PC-3 (cell line): ENCODE measurements at regions of chr4 and their contacts with region 1.

Region 1: DNA sequence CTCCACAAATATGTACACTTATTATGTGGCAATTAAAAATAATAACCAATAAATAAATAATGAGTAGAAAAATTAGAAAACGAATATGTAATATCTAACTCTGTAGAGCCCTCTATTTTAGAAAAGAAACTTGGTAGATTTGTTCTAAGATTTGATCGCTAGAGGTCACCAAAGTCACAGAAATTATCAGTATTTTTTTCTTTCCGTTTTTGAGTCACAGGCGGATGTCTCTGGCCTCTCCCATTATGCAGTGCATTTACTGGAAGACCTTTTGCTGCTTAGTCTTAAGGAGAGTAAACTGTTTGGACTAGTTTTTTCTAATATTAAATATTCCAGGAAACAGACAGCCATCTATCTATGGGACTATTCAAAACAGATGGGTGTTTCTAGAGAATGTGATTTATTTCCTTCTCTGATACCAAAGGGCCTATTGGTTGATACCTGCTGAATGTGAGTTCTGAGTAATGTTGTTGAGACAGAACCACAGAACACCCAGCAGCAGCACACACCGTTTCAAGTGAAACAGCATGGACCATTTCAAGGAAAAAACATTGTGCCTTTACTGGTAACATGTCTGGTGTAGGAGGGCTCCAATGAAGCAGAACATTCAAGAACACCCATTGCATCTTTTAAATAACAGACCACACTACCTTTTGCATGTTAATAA is 34.0 kb upstream of the GYPA start:
- DNase-seq: peak; percentile 81
- ATAC-seq: peak; percentile 80
- H3K4me3 ChIP-seq: no peak overlapping the region
- H3K27ac ChIP-seq: no peak overlapping the region
- H3K4me1 ChIP-seq: no peaks in the 10 kb centered on the region
- H3K27me3 ChIP-seq: peaks cover 25% of the 10 kb centered on the region
- CTCF ChIP-seq: peak; percentile 74

Region 2: DNA sequence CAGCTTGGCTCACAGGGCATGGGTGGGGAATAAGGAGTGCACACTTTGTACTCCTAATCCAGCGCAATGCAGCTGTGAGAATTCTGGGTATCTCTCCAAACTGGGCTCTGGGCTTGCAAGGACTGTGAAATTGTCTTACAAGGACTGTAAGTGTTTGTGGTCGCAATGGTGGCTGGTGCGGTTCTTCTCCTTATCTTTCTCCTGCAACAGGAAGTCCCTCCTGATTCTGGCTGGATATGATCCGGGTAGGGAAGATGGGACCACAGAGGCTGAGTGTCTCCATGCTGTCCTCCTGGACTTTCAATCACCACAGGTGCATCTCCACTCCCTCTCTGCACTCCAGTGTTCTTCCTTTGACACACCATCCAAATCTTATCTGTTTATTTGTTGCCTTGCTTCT is 213.5 kb before region 1 on chr4:
- CTCF ChIA-PET with region 1: no interaction called
- POLR2A ChIA-PET with region 1: no interaction called
- intact Hi-C with region 1: no loop called
- DNase-seq: no peak
- ATAC-seq: no peak
- H3K4me3 ChIP-seq: no peak overlapping the region
- H3K27ac ChIP-seq: no peak overlapping the region
- H3K4me1 ChIP-seq: no peaks in the 10 kb centered on the region
- H3K27me3 ChIP-seq: no peaks in the 10 kb centered on the region
- CTCF ChIP-seq: no peak

Region 3: DNA sequence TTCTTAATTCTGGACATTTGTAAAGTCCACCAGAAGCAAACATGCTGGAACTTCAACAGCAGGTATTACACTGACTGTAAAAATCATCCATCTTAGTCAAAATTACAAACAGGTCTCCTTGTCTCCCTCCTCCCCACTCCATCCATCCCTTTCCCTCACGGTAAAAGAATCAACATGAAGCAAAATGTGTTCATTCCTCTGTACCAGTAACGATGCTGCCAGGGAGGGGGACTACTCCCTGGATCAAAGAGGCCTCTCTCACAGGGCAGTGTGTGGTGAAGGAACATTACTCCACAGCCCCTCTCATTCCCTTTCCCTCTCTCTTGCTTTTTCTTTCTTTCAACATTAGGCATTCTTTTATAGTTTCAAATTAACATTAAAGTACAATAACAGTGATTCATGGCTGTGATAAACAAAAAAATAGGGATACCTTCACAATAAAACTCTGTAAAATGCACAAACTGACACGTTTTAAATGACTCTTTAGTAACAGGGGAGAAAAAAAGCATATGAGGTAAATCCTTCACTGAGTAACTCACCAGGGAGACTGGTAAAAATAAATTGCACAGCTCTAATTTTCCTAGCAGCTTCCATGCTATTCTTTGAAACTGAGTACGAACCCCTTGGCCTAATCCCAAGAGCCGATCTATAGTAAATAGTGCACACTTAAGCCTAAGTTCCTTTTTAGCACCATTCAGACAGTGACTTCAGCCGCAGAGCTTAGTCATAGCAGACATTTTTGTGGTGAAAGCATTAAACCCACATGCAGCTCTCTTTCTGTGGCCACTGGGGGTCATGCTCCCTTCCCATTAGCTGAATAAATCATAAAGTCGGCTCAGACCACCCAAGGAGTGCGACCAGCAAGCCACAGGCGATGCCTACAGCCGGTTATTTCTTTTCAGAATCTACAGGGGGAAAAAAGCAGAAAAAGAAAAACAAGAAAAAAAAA is 181.5 kb after region 1 on chr4:
- CTCF ChIA-PET with region 1: no interaction called
- POLR2A ChIA-PET with region 1: no interaction called
- intact Hi-C with region 1: loop called (anchors 10 kb)
- DNase-seq: peak; percentile 85
- ATAC-seq: peak; percentile 95
- H3K4me3 ChIP-seq: no peak overlapping the region
- H3K27ac ChIP-seq: no peak overlapping the region
- H3K4me1 ChIP-seq: peaks cover 12% of the 10 kb centered on the region; the same call in 1 of the 2 replicates
- H3K27me3 ChIP-seq: peaks cover 5% of the 10 kb centered on the region; the same call in 1 of the 2 replicates
- CTCF ChIP-seq: peak; percentile 48

Region 4: DNA sequence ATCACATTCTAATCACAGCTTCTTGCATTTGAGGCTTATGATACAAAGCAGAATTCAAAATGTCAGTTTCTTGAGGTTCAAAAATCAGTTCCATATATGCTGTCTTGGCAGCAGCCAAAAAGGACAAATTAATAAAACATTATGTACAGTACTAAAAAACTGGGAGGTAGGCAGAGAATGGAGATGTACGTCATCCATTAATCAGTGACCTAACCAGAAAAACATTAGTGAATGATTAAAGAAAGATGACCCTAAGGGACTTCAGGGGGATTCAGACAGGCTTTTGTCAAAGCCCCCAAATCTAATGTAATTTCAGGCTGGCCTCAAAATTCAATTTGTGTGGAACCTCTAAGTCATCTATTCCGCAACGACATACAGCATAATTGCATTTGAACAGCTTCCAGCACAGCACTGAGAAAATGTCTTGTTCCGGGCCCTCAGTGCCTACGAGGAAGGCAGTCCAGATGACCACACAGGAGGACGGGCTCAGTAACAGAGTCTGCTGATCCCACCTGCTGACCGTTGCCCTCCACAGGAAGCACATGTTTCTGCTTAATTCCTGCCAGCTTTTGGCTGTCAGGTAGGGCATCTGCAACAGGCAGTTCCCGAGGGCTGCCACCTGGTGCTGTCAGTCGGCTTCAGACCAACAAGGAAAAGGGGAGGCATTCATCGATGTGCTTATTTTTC is 387.6 kb after region 1 on chr4:
- CTCF ChIA-PET with region 1: no interaction called
- POLR2A ChIA-PET with region 1: no interaction called
- intact Hi-C with region 1: loop called (anchors 1 kb)
- DNase-seq: no peak
- ATAC-seq: no peak
- H3K4me3 ChIP-seq: no peak overlapping the region
- H3K27ac ChIP-seq: no peak overlapping the region
- H3K4me1 ChIP-seq: peaks cover 9% of the 10 kb centered on the region
- H3K27me3 ChIP-seq: no peaks in the 10 kb centered on the region
- CTCF ChIP-seq: no peak

Region 5: DNA sequence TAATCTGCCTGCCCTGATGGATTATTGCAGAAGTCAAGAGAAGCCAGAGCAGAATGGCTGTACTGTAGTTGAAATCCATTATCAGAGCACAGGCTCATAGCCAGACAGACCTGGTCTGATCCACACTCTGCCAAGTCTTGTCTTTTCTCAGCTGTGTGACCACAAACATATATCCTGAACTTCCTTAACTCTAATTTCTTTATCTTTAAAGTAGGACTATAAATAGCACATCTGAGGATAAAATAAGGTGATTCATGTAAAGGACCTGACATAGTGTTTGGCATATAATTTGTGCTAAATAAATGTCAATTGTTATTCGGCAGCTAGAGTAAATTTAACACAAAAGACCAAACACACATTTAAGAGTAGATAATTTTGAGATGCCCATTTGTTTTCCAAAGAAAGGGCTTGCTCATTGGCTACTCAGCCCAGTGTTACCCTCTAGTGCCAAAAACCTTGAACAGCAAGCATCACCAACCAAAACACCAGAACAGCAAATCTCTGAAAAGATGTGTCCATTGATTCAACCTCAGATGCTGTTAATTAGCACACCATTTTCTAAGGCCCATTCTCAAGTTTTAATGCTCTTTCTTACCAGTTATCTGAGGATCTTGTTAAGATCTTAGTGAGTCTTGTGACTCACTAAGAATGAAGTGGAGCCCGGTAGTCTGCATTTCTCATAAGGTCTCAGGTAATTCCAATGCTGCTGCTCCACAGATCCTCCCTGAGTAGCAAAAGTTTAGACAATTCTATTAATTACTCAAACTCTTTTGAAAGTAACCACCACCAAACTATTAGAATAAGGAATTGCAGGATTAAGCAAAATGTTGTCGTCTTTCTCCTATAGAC is 580.3 kb after region 1 on chr4:
- CTCF ChIA-PET with region 1: no interaction called
- POLR2A ChIA-PET with region 1: no interaction called
- intact Hi-C with region 1: loop called (anchors 1 kb)
- DNase-seq: peak; percentile 50
- ATAC-seq: peak; percentile 72
- H3K4me3 ChIP-seq: no peak overlapping the region
- H3K27ac ChIP-seq: no peak overlapping the region
- H3K4me1 ChIP-seq: 0 out of 2 replicates have a peak, but pooled peaks cover 7% of the 10 kb centered on the region
- H3K27me3 ChIP-seq: no peaks in the 10 kb centered on the region
- CTCF ChIP-seq: peak; percentile 83

Region 6: DNA sequence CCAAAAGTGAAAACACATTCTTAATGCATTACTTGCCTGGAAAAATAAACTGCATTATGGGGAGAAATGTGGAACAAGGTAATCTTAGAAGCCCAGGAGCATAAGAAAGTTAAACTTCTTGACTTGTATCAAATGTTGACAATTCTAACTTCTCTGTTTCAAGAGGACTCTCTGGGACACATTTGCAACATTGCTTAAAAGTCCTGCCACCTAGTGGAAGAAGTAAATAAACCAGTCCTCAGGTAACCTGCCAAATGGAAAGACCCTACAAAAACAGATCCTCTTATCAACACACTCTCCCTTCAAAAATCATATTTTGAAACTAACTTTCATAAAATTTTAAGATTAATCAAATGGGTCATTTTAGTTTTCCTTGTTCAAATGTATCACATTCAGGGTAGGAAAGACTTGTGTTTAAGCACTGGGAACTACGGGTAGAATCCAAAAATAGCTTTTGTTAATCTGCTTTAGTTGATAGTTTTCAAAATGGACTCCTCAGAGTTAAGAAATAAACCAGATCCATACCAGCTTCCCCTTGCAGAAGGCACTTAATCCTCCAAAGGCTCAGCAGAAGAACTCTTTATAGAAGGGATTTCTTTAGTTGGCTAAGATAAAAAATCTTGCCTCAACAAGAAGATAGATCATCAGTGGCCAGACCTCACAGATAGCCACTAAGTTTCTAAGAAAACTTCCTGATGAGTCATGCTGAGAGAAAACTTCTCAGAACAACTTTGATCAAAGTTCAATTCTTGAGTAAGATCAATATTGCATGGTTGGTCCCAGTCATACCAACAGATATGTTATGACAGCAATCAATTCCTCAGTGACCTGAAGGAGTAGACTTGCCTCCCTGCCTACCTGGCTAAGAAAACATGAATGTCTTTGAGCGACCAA is 613.1 kb after region 1 on chr4:
- CTCF ChIA-PET with region 1: no interaction called
- POLR2A ChIA-PET with region 1: no interaction called
- intact Hi-C with region 1: loop called (anchors 1 kb)
- DNase-seq: peak; percentile 62
- ATAC-seq: peak; percentile 49; the same call in 1 of the 2 replicates
- H3K4me3 ChIP-seq: no peak overlapping the region
- H3K27ac ChIP-seq: no peak overlapping the region
- H3K4me1 ChIP-seq: peaks cover 2% of the 10 kb centered on the region; the same call in 1 of the 2 replicates
- H3K27me3 ChIP-seq: no peaks in the 10 kb centered on the region
- CTCF ChIP-seq: peak; percentile 87

Region 7: GRCh38 chr4:145609481-145610427 is 1435.2 kb after region 1 on chr4:
- CTCF ChIA-PET with region 1: no interaction called
- POLR2A ChIA-PET with region 1: no interaction called
- intact Hi-C with region 1: loop called (anchors 5 kb)
- DNase-seq: peak; percentile 90
- ATAC-seq: peak; percentile 73
- H3K4me3 ChIP-seq: no peak overlapping the region
- H3K27ac ChIP-seq: no peak overlapping the region
- H3K4me1 ChIP-seq: no peaks in the 10 kb centered on the region
- H3K27me3 ChIP-seq: no peaks in the 10 kb centered on the region
- CTCF ChIP-seq: peak; percentile 96